ENCODE measurements at regions of chr4 and their contacts with region 1.

Region 1: DNA sequence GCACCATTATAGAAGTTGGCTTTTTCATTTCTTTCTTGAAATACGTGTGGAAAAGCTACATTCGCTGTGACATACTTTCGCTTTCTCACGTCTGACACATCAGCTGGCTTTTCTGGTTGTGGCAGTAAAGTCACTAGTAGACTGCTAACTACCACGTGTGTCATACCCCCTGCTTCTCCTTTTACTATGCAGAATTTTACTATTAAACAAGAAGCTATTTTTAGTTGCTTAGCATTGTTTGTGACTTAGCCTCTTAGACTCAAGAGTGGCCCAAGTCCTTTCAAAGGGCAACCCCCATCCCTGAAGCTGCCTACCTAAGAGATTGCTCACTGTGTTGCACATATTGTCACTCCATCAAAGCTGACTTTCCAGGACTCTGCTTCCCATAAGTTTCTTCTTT is 2.1 kb upstream of the IL2 start:
- DNase-seq: peak; percentile 74
- ATAC-seq: peak; percentile 86
- H3K4me3 Mint-ChIP-seq: peak overlapping the region; percentile 62
- H3K27ac Mint-ChIP-seq: peak overlapping the region; percentile 89
- H3K4me1 Mint-ChIP-seq: peaks cover 51% of the 10 kb centered on the region
- H3K27me3 Mint-ChIP-seq: no peaks in the 10 kb centered on the region

Region 2: GRCh38 chr4:120922381-120923206 is 1536.0 kb before region 1 on chr4 and contains the start of gene PRDM5:
- CTCF ChIA-PET with region 1: no interaction called
- POLR2A ChIA-PET with region 1: no interaction called
- intact Hi-C with region 1: no loop called
- DNase-seq: peak; percentile 49
- ATAC-seq: peak; percentile 68
- H3K4me3 Mint-ChIP-seq: peak within 1 kb of the TSS; percentile 74
- H3K27ac Mint-ChIP-seq: peak within 1 kb of the TSS; percentile 28
- H3K4me1 Mint-ChIP-seq: peaks cover 17% of the 10 kb centered on the region
- H3K27me3 Mint-ChIP-seq: peaks cover 30% of the 10 kb centered on the region
- total RNA-seq, gene PRDM5: 0.05 TPM in 1 of 2 experiments, not detected in the other

Region 3: DNA sequence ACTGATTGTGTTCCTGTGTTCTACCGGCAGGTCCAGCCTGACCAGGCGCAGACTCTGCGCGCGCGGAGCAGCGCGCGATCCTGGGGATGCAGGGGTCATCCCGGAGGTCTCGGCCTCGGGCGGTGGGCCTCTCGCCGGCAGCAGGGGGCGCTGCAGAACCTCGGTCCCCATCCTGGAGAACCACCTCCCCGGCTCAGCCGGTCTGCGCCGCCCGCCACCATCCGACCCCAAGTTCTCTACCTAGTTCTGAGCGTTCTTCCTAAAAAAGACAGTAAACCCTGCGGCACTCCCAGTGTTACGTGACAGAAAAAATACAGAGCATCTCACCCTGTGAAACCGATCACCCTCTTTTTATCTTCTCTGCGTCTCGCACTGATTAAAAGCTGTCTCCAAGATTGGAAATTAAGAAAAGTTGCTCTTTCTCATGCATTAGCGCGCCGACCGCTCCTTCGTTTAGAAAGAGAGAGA is 508.4 kb before region 1 on chr4:
- CTCF ChIA-PET with region 1: no interaction called
- POLR2A ChIA-PET with region 1: no interaction called
- intact Hi-C with region 1: loop called in 1 of 2 experiments (anchors 2 kb)
- DNase-seq: peak; percentile 94
- ATAC-seq: peak; percentile 87
- H3K4me3 Mint-ChIP-seq: peak overlapping the region; percentile 77
- H3K27ac Mint-ChIP-seq: no peak overlapping the region
- H3K4me1 Mint-ChIP-seq: peaks cover 4% of the 10 kb centered on the region
- H3K27me3 Mint-ChIP-seq: peaks cover 44% of the 10 kb centered on the region

Region 4: DNA sequence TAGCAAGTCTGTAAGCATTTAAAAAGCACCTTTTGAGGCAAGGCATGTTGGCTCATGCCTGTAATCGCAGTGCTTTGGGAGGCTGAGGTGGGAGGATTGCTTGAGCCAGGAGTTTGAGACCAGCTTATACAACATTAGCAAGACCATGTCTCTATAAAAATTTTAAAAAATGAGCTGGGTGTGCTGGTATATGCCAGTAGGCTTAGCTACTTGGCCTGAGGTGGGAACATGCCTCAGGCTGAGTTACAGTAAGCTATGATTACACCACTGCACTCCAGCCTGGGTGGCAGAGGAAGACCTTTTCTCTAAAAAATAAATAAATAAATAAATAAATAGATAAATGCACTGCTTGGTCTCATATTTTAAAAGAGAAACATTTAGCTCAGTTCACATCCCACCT is 279.7 kb before region 1 on chr4:
- CTCF ChIA-PET with region 1: no interaction called
- POLR2A ChIA-PET with region 1: no interaction called
- intact Hi-C with region 1: no loop called
- DNase-seq: no peak
- ATAC-seq: no peak
- H3K4me3 Mint-ChIP-seq: no peak overlapping the region
- H3K27ac Mint-ChIP-seq: no peak overlapping the region
- H3K4me1 Mint-ChIP-seq: no peaks in the 10 kb centered on the region
- H3K27me3 Mint-ChIP-seq: no peaks in the 10 kb centered on the region

Region 5: DNA sequence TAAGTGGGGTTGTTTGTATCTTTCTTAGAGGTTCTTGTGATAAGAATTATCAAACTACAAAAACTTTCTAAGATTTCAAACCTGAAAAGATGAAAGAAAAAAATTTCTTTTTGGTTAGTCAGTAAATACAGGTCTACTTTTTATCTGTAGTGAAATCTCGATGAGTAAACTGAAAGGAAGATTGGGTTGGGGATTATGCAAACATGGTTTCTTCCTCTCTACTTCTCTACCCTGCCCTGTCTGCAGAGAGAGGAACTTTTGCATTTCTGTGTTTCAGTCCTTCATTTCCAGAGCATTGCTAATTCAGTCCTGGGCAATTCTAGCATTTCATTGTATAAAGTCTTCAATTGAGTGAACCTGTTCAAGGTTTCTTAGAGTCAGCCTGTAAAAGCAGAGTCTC is 49.5 kb after region 1 on chr4:
- CTCF ChIA-PET with region 1: no interaction called
- POLR2A ChIA-PET with region 1: interaction called, 11 read pairs
- intact Hi-C with region 1: loop called (anchors 1 kb)
- DNase-seq: no peak
- ATAC-seq: peak; percentile 77
- H3K4me3 Mint-ChIP-seq: peak overlapping the region; percentile 64
- H3K27ac Mint-ChIP-seq: peak overlapping the region; percentile 92
- H3K4me1 Mint-ChIP-seq: peaks cover 84% of the 10 kb centered on the region
- H3K27me3 Mint-ChIP-seq: peaks cover 2% of the 10 kb centered on the region

Region 6: GRCh38 chr4:122542411-122543236 is 84.0 kb after region 1 on chr4:
- CTCF ChIA-PET with region 1: interaction called, 6 read pairs
- POLR2A ChIA-PET with region 1: interaction called, 12 read pairs
- intact Hi-C with region 1: loop called (anchors 1 kb)
- DNase-seq: no peak
- ATAC-seq: peak; percentile 63
- H3K4me3 Mint-ChIP-seq: peak overlapping the region; percentile 53
- H3K27ac Mint-ChIP-seq: peak overlapping the region; percentile 95
- H3K4me1 Mint-ChIP-seq: peaks cover 94% of the 10 kb centered on the region
- H3K27me3 Mint-ChIP-seq: no peaks in the 10 kb centered on the region

Region 7: DNA sequence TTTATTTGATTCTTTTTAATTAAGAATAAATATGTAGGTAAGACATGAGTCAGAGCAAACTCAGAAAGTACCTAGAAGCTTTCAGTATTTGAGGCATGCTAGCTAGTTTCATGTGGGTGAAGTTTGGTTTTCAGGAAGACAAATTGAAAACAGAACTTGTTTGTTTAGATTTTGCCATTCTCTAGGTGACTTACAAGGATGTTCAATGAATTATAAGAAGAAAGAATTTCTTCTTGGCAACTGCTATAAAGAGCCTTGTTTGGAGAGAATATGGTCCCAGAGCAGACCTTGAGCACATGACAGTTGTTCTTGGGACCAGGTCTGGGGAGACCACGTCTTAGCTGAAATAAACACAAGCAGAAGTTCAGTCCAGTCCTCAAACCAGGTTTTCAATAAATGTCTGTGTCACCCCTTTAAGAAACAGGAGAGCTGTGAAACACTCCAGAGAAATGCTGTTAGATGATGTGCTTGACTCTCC is 200.2 kb after region 1 on chr4:
- CTCF ChIA-PET with region 1: no interaction called
- POLR2A ChIA-PET with region 1: no interaction called
- intact Hi-C with region 1: loop called (anchors 5 kb)
- DNase-seq: no peak
- ATAC-seq: peak; percentile 86
- H3K4me3 Mint-ChIP-seq: peak overlapping the region; percentile 42
- H3K27ac Mint-ChIP-seq: peak overlapping the region; percentile 98
- H3K4me1 Mint-ChIP-seq: peaks cover 61% of the 10 kb centered on the region
- H3K27me3 Mint-ChIP-seq: no peaks in the 10 kb centered on the region

Region 8: GRCh38 chr4:123671633-123672404 is 1213.2 kb after region 1 on chr4:
- CTCF ChIA-PET with region 1: no interaction called
- POLR2A ChIA-PET with region 1: no interaction called
- intact Hi-C with region 1: loop called in 1 of 2 experiments (anchors 5 kb)
- DNase-seq: peak; percentile 60
- ATAC-seq: peak; percentile 79
- H3K4me3 Mint-ChIP-seq: no peak overlapping the region
- H3K27ac Mint-ChIP-seq: no peak overlapping the region
- H3K4me1 Mint-ChIP-seq: peaks cover 30% of the 10 kb centered on the region
- H3K27me3 Mint-ChIP-seq: peaks cover 51% of the 10 kb centered on the region